Activated B cell treated with CpG ODN at 0.5 μM for 24 hours (primary cell): ENCODE measurements at regions of chr1 and their contacts with region 1.

Region 1: GRCh38 chr1:182839209-182840065 is at the start of gene DHX9:
- DNase-seq: peak; percentile 99
- ATAC-seq: peak; percentile 82
- H3K4me3 Mint-ChIP-seq: peak within 1 kb of the TSS; percentile 92
- H3K27ac Mint-ChIP-seq: peak within 1 kb of the TSS; percentile 98
- H3K4me1 Mint-ChIP-seq: peaks cover 39% of the 10 kb centered on the region
- H3K27me3 Mint-ChIP-seq: no peaks in the 10 kb centered on the region
- CTCF ChIP-seq: no peak
- total RNA-seq, gene DHX9: 265 and 266 TPM in 2 replicates

Region 2: GRCh38 chr1:182446033-182446669 is 393.3 kb before region 1 on chr1:
- CTCF ChIA-PET with region 1: no interaction called
- POLR2A ChIA-PET with region 1: no interaction called
- intact Hi-C with region 1: loop called (anchors 2 kb)
- DNase-seq: no peak
- ATAC-seq: peak; percentile 81
- H3K4me3 Mint-ChIP-seq: no peak overlapping the region
- H3K27ac Mint-ChIP-seq: no peak overlapping the region
- H3K4me1 Mint-ChIP-seq: peaks cover 4% of the 10 kb centered on the region
- H3K27me3 Mint-ChIP-seq: no peaks in the 10 kb centered on the region
- CTCF ChIP-seq: peak; percentile 58

Region 3: GRCh38 chr1:182604169-182605164 is 235.0 kb before region 1 on chr1 and contains the start of gene RGS16:
- CTCF ChIA-PET with region 1: interaction called, 3 read pairs
- POLR2A ChIA-PET with region 1: interaction called, 4 read pairs
- intact Hi-C with region 1: loop called (anchors 1 kb)
- DNase-seq: peak; percentile 88
- ATAC-seq: peak; percentile 98
- H3K4me3 Mint-ChIP-seq: no peak within 1 kb of the TSS
- H3K27ac Mint-ChIP-seq: peak within 1 kb of the TSS; percentile 73
- H3K4me1 Mint-ChIP-seq: peaks cover 4% of the 10 kb centered on the region
- H3K27me3 Mint-ChIP-seq: no peaks in the 10 kb centered on the region
- CTCF ChIP-seq: no peak
- total RNA-seq, gene RGS16: 2.6 TPM in 2 replicates

Region 4: DNA sequence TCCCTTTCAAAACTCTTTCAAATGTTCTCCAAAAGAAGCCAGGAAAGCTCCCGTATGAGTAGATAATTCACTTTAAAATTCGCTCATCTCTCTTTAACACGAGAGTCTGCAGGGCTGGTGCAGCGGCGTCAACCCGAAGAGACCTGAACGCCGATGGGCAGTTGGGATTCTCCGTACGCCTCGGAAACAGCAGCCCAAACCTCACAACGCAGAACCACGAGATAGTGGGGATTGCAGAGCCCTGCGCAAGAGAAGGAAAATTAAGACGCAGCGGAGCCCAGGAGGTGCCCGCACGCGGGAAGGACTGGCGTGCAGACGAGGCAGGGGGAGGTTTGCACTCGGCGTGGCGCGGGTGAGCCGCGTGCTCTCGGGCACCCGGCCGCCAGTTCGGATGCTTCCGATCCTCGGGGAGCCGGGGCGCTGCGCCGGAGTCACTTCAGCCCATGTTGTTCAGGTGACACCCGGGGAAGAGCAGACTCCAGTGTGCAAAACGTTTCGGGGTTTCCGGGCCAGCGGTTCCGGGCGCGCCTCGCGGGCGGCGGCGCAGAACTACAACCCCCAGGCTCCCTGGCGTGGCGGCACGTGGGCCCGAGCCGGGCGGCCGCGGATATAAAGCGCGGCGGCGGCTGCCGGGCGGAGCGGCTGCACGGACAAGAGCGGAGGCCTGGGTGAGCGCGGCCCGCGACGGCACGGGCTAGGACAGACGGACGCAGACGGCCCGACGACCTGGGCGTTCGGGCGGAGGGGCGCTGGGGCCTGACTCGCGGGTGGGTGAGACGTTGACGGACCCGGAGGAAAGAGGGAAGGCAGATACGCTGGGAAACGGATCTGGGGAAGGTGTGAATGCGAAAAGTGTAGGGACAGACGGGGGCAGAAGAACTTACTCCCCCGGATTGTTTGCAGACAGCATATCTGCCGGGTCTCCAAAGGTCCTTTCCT is 50.0 kb before region 1 on chr1 and contains the start of gene NPL:
- CTCF ChIA-PET with region 1: interaction called, 4 read pairs
- POLR2A ChIA-PET with region 1: interaction called, 5 read pairs
- intact Hi-C with region 1: loop called (anchors 1 kb)
- DNase-seq: peak; percentile 78
- ATAC-seq: peak; percentile 94
- H3K4me3 Mint-ChIP-seq: peak within 1 kb of the TSS; percentile 93
- H3K27ac Mint-ChIP-seq: peak within 1 kb of the TSS; percentile 80
- H3K4me1 Mint-ChIP-seq: peaks cover 17% of the 10 kb centered on the region
- H3K27me3 Mint-ChIP-seq: peaks cover 3% of the 10 kb centered on the region
- CTCF ChIP-seq: no peak
- total RNA-seq, gene NPL: 1.9 and 2.9 TPM in 2 replicates

Region 5: GRCh38 chr1:183635606-183636333 is 796.3 kb after region 1 on chr1 and contains the start of gene ARPC5:
- CTCF ChIA-PET with region 1: no interaction called
- POLR2A ChIA-PET with region 1: no interaction called
- intact Hi-C with region 1: loop called (anchors 1 kb)
- DNase-seq: peak; percentile 95
- ATAC-seq: peak; percentile 89
- H3K4me3 Mint-ChIP-seq: peak within 1 kb of the TSS; percentile 100
- H3K27ac Mint-ChIP-seq: peak within 1 kb of the TSS; percentile 100
- H3K4me1 Mint-ChIP-seq: peaks cover 46% of the 10 kb centered on the region
- H3K27me3 Mint-ChIP-seq: no peaks in the 10 kb centered on the region
- CTCF ChIP-seq: no peak
- total RNA-seq, gene ARPC5: 193 and 224 TPM in 2 replicates